Activated T-helper 1 cell treated with anti-CD3 and anti-CD28 coated beads, Interleukin-12 subunit alpha, Interleukin-12 subunit beta, Interleukin-2, Interleukin-4 antibody, amounts not matched to agents 30 ng/mL and 10 ng/mL and 1 ng/mL, durations not matched to agents 14 hours and 24 hours and 36 hours (primary cell): ENCODE measurements at regions of chr6 and their contacts with region 1.

Region 1: GRCh38 chr6:2853761-2854395 is 12.2 kb upstream of the SERPINB1 start:
- DNase-seq: no peak
- H3K4me3 Mint-ChIP-seq: peak overlapping the region; percentile 73
- H3K27ac Mint-ChIP-seq: peak overlapping the region; percentile 99
- H3K4me1 Mint-ChIP-seq: peaks cover 75% of the 10 kb centered on the region
- H3K27me3 Mint-ChIP-seq: no peaks in the 10 kb centered on the region

Region 2: GRCh38 chr6:2841264-2842138 is 12.4 kb before region 1 on chr6 and contains the start of gene SERPINB1:
- intact Hi-C with region 1: loop called (anchors 1 kb)
- DNase-seq: peak; percentile 80
- H3K4me3 Mint-ChIP-seq: peak within 1 kb of the TSS; percentile 96
- H3K27ac Mint-ChIP-seq: peak within 1 kb of the TSS; percentile 93
- H3K4me1 Mint-ChIP-seq: peaks cover 62% of the 10 kb centered on the region
- H3K27me3 Mint-ChIP-seq: no peaks in the 10 kb centered on the region
- total RNA-seq, gene SERPINB1: 79.5 and 80.1 TPM in 2 replicates

Region 3: DNA sequence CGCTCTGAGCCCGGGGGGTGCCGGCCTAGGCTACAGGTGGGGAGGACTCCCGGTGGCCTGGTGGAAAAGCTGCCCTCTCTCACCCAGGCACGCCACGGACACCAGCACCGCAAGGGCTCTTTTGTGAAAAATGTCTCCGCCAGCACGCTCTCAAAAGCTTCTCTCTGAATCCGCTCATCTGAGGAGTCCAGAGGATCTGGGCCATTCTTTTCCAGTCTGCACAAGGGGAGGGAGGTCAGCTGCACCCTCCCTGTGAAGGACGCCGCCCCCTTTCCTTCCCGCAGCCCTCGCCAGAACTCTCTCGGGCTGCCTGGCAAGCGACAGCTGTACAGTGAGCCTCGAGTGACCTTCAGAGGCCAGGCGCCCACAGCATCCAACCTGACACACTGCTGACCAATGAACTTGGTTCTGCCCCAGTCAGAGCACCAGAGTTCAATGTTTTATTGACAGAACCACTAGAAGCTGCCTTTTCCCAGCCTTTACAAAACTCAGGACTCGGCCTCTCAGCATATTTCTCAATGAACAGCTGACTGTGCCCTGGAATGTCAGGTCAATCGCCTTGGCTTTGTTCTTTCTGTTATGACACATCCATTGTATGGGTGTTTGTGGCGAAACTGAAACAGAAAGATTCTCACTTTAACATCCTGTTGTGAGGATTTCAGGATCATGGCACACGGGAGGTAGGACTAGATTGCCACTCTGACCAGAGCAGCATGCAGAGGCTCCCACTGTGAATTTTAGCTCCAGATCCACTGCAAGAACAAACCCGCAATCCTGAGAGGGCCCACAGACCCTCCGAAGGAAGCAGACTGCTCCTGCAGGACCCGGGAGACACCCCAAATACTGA is 22.6 kb after region 1 on chr6:
- intact Hi-C with region 1: loop called (anchors 1 kb)
- DNase-seq: no peak
- H3K4me3 Mint-ChIP-seq: peak overlapping the region; percentile 87
- H3K27ac Mint-ChIP-seq: peak overlapping the region; percentile 98
- H3K4me1 Mint-ChIP-seq: peaks cover 81% of the 10 kb centered on the region
- H3K27me3 Mint-ChIP-seq: no peaks in the 10 kb centered on the region

Region 4: GRCh38 chr6:3139090-3139903 is 285.4 kb after region 1 on chr6:
- intact Hi-C with region 1: no loop called
- DNase-seq: no peak
- H3K4me3 Mint-ChIP-seq: no peak overlapping the region
- H3K27ac Mint-ChIP-seq: no peak overlapping the region
- H3K4me1 Mint-ChIP-seq: no peaks in the 10 kb centered on the region
- H3K27me3 Mint-ChIP-seq: peaks cover 3% of the 10 kb centered on the region

Region 5: GRCh38 chr6:3209114-3210023 is 355.5 kb after region 1 on chr6:
- intact Hi-C with region 1: loop called (anchors 1 kb)
- DNase-seq: no peak
- H3K4me3 Mint-ChIP-seq: peak overlapping the region; percentile 43
- H3K27ac Mint-ChIP-seq: peak overlapping the region; percentile 89
- H3K4me1 Mint-ChIP-seq: peaks cover 41% of the 10 kb centered on the region
- H3K27me3 Mint-ChIP-seq: peaks cover 23% of the 10 kb centered on the region